ENCODE measurements at regions of chr2 and their contacts with region 1.

Region 1: GRCh38 chr2:239349448-239350135 is 51.2 kb downstream of the HDAC4 start:
- DNase-seq: peak; percentile 84
- H3K4me3 ChIP-seq: peak overlapping the region in 1 of 3 experiments; percentile 2
- H3K27ac ChIP-seq: peak overlapping the region; percentile 61
- H3K4me1 ChIP-seq: peaks cover 39% of the 10 kb centered on the region
- H3K27me3 ChIP-seq: no peaks in the 10 kb centered on the region
- CTCF ChIP-seq: no peak

Region 2: DNA sequence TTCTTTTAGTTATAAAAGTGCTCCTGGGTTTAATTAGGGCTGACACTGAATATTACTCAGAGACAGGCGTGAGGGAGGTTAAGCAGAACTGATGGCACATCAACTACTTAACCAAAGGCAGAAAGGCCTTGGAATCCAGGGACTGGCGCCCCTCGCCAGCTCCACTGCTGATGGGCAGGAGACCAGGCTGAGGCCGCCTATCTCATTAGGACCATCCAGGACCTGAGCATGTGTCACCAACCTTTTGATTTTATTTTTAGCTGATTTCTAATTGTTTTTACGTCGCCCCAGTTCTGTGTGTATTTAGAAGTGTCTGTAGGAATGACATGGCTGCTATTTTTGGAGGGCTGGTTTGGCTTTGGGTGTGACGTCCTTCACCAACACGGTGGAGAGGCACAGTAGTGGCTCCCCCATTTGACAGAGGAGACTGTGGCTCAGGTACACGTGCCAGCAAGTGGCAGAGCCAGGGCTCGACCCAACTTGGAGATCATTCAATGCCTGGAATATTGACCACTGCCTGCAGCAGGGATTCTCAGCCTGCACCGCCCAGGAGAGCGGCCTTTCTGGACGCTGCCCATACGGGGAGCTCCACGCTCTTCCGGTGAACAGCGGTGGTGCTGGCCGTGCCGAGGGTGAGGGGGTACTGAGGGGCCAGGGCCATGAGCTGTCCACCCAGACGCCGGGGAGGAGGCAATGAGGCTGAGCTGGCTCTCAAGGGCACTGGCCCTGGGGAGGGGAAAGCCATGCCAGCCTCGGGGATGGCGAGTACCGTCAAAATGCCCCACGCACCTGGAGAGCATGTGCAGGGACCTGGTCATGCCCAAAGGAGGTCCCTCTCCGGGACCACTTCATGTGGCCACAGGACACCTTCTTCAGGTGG is 717.2 kb before region 1 on chr2:
- CTCF ChIA-PET with region 1: no interaction called
- dilution Hi-C with region 1: no loop called
- in situ Hi-C with region 1: no loop called
- intact Hi-C with region 1: no loop called
- DNase-seq: no peak
- H3K4me3 ChIP-seq: no peak overlapping the region
- H3K27ac ChIP-seq: no peak overlapping the region
- H3K4me1 ChIP-seq: peaks cover 17% of the 10 kb centered on the region
- H3K27me3 ChIP-seq: no peaks in the 10 kb centered on the region
- CTCF ChIP-seq: no peak

Region 3: GRCh38 chr2:239252801-239253200 is 96.8 kb before region 1 on chr2:
- CTCF ChIA-PET with region 1: no interaction called
- dilution Hi-C with region 1: loop called (anchors 5 kb)
- in situ Hi-C with region 1: no loop called
- intact Hi-C with region 1: no loop called
- DNase-seq: no peak
- H3K4me3 ChIP-seq: no peak overlapping the region
- H3K27ac ChIP-seq: no peak overlapping the region
- H3K4me1 ChIP-seq: peaks cover 8% of the 10 kb centered on the region
- H3K27me3 ChIP-seq: no peaks in the 10 kb centered on the region
- CTCF ChIP-seq: no peak

Region 4: GRCh38 chr2:239275044-239275685 is 74.4 kb before region 1 on chr2:
- CTCF ChIA-PET with region 1: no interaction called
- dilution Hi-C with region 1: loop called (anchors 5 kb)
- in situ Hi-C with region 1: no loop called
- intact Hi-C with region 1: no loop called
- DNase-seq: peak; percentile 94
- H3K4me3 ChIP-seq: peak overlapping the region in 2 of 3 experiments; percentile 8 to 29
- H3K27ac ChIP-seq: peak overlapping the region; percentile 32
- H3K4me1 ChIP-seq: peaks cover 26% of the 10 kb centered on the region
- H3K27me3 ChIP-seq: no peaks in the 10 kb centered on the region
- CTCF ChIP-seq: no peak

Measured in mammary epithelial cell (primary cell).